Esophagus muscularis mucosa (tissue), 4 donors: ENCODE measurements at regions of chr22 and their contacts with region 1.

Region 1: DNA sequence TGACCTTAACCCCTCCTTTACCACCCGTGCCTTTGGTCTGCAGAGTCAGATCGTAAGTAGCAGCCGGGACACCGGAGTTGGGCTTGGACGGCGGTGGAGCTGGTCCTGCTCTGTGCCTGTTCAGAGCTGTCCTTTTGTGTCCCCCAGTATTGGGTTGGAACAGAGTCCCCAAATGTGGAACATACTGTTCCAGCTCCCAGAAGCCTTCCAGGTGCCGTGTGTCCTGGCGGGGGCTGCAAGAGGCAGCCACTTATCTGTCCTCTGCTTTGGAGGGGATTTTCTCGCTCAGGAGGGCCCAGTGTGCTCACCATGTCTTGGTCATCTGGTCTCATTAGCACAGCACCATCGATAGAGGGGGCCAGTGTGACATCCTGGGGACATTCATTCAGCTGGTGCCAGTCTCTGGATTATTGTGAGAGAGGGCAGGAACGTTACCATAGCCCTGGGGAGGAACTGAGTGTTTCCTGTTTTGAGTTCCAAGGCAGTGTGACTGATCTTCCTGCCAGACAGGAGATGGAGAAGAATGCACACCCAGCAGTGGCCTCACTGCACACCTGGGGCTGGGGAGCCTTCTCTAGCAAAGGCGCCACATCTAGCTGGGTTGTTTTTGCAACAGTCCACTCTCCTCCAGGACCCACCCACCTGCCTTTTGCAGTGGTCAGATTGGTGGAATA is 12.4 kb downstream of the CRELD2 start:
- DNase-seq: no peak
- H3K4me3 ChIP-seq: no peak overlapping the region
- H3K27ac ChIP-seq: peak overlapping the region in 2 of 4 donors; percentile 33 to 98
- H3K4me1 ChIP-seq: peaks cover 53 to 66% (median 64%) of the 10 kb centered on the region in 4 donors
- H3K27me3 ChIP-seq: peaks cover 0 to 20% (median 8%) of the 10 kb centered on the region in 4 donors
- CTCF ChIP-seq: peak; percentile 35 to 54 (median 42)
- EP300 ChIP-seq: no peak
- POLR2A ChIP-seq: no peak

Region 2: DNA sequence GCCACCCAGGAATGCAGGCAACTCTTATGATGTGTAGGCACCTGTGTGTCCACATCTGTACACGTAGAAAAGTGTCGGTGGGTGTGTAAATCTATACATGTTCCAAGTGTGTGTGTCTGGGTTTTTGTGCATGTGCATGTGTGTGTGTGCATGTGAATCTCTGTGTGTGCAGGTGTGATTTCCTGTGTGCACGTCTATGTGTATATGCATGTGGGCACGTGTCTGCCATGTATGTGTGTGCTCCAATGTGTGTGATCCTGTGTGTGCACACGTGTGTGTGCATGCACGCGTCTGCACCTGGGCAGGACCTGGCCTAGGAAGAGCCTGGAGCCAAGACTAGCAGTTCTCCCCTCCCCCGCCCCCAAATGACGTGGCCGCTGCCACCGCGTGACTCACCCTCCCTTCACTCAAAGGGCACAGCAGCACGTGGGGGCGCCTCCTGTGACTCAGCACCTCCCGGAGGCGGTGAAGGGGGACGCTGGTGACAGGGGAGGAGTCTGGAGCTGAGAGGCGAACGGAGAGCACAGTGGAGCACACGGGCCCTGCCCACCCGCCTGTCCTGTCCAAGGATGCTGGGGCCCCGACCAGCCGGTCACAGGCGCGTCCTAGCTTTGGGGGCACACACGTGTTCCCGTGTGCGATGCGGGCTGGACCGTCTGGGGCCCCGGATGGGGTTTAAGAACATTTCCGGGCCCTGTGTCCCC is 39.8 kb after region 1 on chr22:
- intact Hi-C with region 1: loop called (anchors 5 kb)
- DNase-seq: peak; percentile 99
- H3K4me3 ChIP-seq: peak overlapping the region; percentile 61 to 69 (median 64)
- H3K27ac ChIP-seq: peak overlapping the region; percentile 88 to 98 (median 95)
- H3K4me1 ChIP-seq: peaks cover 58 to 73% (median 61%) of the 10 kb centered on the region in 4 donors
- H3K27me3 ChIP-seq: no peaks in the 10 kb centered on the region
- CTCF ChIP-seq: no peak
- EP300 ChIP-seq: peak; percentile 29
- POLR2A ChIP-seq: peak; percentile 88

Region 3: DNA sequence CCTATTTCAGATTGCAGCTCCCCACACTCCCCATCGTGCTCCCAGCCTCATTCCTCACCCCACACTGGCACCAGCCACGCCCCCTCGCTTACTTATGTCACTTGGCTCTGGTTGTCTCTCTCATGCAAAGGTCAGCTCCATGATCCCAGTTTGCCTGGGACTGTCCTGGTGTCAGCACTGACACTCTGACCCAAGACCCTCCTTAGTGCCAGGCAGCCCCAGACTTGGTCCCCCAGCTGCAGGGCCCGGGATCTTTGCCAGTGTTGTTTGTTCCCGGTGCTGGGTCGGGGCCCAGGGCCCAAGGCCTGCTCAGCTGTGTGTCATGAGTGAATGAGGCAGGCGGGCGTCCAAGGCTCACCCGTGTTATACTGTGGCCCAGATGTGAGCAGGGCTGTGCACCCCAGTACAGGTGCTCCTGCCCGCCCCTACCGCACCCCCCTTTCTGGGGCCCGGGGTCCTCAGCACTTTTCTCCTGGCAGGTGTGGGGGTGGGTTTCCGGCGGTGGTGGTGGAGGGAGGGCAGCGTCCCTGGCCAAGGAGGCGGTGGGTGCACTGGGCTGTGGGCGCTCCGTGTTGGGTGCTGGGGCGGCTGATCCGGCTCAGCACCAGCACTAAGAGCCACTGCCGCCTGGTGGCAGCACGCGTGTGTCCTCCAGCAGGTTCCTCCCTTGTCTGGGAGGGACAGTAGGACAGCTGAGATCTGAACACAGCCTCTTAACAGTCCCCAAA is 62.2 kb after region 1 on chr22:
- intact Hi-C with region 1: loop called (anchors 5 kb)
- DNase-seq: no peak
- H3K4me3 ChIP-seq: no peak overlapping the region
- H3K27ac ChIP-seq: no peak overlapping the region
- H3K4me1 ChIP-seq: peaks cover 0 to 8% (median 8%) of the 10 kb centered on the region in 4 donors
- H3K27me3 ChIP-seq: peaks cover 0 to 16% (median 0%) of the 10 kb centered on the region in 4 donors
- CTCF ChIP-seq: peak; percentile 58 to 71 (median 60)
- EP300 ChIP-seq: no peak
- POLR2A ChIP-seq: no peak

Region 4: DNA sequence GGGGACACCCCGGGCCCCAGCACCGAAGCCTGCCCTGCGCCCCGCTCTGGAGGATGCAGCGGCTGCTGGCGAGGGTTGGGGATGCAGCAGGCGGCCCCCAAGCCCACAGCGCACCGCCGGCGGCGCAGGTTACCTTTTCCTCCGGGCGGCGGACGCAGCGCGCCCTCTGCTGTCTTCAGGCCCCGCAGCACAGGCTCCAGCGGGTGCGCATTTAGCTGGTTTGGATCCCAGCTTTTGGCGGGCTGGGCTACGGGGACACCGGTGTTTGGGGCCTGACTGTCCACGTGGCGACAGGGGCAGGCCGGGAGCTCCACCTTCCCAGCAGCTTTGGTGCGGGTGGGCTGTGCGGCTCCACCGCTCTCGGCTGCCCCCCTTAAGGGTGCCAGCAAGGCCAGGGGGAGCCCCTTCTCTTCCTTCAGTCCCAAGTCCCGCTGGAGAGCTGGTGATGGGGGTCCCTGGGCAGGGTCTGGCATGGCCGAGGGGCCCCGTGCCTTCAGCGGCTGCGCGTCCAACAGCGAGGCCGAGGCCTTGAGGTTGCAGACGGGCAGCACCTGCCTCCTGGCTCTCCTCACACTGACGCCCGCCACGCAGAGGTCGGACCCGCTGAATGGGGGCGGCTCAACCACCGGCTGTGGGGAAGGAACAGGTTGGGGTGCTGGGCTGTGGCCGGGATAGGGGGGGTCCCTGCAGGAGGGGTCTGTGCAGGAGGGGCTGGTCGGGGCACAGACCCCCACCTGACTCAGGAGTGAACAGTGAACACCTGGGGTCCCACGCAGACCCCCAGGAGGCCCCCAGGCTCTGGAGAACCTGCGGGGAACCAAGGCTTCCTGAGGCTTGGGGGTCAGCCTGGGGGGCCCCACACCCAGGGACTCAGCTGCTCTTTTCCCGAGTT is 99.7 kb after region 1 on chr22:
- intact Hi-C with region 1: loop called (anchors 1 kb)
- DNase-seq: no peak
- H3K4me3 ChIP-seq: peak overlapping the region in 1 of 4 donors; percentile 9
- H3K27ac ChIP-seq: no peak overlapping the region
- H3K4me1 ChIP-seq: peaks cover 5 to 11% (median 9%) of the 10 kb centered on the region in 4 donors
- H3K27me3 ChIP-seq: peaks cover 0 to 84% (median 5%) of the 10 kb centered on the region in 4 donors
- CTCF ChIP-seq: peak; percentile 80 to 94 (median 83)
- EP300 ChIP-seq: no peak
- POLR2A ChIP-seq: no peak

Region 5: DNA sequence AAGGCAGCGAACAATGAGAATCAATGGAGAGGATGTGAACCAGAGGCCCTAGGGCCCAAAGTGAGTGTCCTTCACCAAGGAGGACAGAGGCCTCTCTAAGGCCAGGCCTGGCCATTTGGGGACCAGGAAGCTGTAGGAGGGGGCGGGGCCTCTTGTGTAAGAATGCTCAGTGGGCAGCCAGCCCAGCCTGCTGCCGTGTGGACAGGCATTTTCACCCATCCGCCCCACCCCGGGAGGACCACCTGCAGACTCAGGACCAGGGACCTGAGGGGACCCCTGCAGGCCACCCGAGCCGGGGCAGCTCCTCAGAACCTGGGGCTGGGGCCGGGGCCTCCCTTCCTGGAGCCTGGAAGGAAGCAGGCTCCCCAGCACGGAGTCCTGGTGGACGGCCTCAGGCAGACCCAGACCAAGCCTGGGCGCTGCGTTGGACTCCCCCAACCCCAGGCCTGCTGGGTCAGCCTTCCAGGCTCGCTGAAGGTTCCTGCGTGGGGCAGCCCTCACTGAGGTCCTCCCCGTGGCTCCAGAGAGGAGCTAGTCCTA is 253.2 kb after region 1 on chr22:
- intact Hi-C with region 1: loop called (anchors 5 kb)
- DNase-seq: peak; percentile 95
- H3K4me3 ChIP-seq: peak overlapping the region; percentile 76 to 87 (median 84)
- H3K27ac ChIP-seq: peak overlapping the region; percentile 12 to 69 (median 52)
- H3K4me1 ChIP-seq: peaks cover 31 to 48% (median 43%) of the 10 kb centered on the region in 4 donors
- H3K27me3 ChIP-seq: peaks cover 0 to 20% (median under 1%) of the 10 kb centered on the region in 4 donors
- CTCF ChIP-seq: no peak
- EP300 ChIP-seq: no peak
- POLR2A ChIP-seq: no peak